Mammary epithelial cell (primary cell): ENCODE measurements at regions of chr22 and their contacts with region 1.

Region 1: DNA sequence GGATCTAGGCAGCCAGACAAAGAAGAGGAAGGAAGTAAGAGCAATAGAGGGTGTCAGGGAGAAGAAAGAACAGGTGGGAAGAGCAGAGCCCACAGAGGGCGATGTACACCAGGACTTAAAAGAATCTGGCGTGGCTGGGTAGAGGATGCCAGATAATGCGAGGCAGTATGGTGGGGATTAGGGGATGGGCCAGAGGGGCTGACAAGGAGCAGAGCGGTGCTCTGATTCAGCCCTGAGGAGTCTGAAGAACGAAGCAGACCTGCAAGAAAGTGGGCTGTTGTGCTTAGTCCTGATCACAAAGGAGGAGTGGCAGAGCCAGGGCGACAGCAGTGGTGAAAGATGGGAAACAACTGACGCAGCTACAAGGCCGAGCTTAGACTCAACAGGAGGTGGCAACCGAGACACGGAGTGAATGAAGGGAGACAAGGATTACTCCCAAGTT is 163.7 kb downstream of the LARGE1 start:
- DNase-seq: no peak
- H3K4me3 ChIP-seq: no peak overlapping the region
- H3K27ac ChIP-seq: no peak overlapping the region
- H3K4me1 ChIP-seq: no peaks in the 10 kb centered on the region
- H3K27me3 ChIP-seq: no peaks in the 10 kb centered on the region
- CTCF ChIP-seq: no peak

Region 2: GRCh38 chr22:33492210-33492651 is 264.3 kb before region 1 on chr22:
- CTCF ChIA-PET with region 1: no interaction called
- dilution Hi-C with region 1: no loop called
- in situ Hi-C with region 1: no loop called
- intact Hi-C with region 1: no loop called
- DNase-seq: no peak
- H3K4me3 ChIP-seq: no peak overlapping the region
- H3K27ac ChIP-seq: no peak overlapping the region
- H3K4me1 ChIP-seq: no peaks in the 10 kb centered on the region
- H3K27me3 ChIP-seq: no peaks in the 10 kb centered on the region
- CTCF ChIP-seq: no peak

Region 3: GRCh38 chr22:33737662-33738061 is 18.9 kb before region 1 on chr22:
- CTCF ChIA-PET with region 1: no interaction called
- dilution Hi-C with region 1: no loop called
- in situ Hi-C with region 1: no loop called
- intact Hi-C with region 1: no loop called
- DNase-seq: no peak
- H3K4me3 ChIP-seq: no peak overlapping the region
- H3K27ac ChIP-seq: no peak overlapping the region
- H3K4me1 ChIP-seq: no peaks in the 10 kb centered on the region
- H3K27me3 ChIP-seq: no peaks in the 10 kb centered on the region
- CTCF ChIP-seq: no peak

Region 4: DNA sequence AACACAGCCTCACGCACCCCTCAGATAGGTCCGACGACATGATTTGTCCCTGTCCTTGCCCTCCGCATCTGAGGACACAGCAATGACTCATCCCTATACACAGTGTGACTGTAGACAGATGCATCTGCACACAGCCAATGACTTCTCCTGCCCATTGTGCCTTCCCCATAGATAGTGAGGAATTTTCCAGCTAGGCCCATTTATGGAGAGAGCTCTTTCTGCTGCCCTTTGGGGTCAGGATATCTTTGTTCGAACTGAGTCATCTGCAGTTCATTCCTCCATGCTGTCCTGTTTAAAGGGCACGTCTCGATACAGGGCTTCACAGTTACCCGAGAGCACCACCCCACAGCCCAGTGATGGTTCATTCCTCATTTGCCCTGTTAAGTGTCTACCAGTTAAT is 67.0 kb after region 1 on chr22:
- CTCF ChIA-PET with region 1: no interaction called
- dilution Hi-C with region 1: loop called (anchors 5 kb)
- in situ Hi-C with region 1: no loop called
- intact Hi-C with region 1: no loop called
- DNase-seq: no peak
- H3K4me3 ChIP-seq: no peak overlapping the region
- H3K27ac ChIP-seq: no peak overlapping the region
- H3K4me1 ChIP-seq: no peaks in the 10 kb centered on the region
- H3K27me3 ChIP-seq: no peaks in the 10 kb centered on the region
- CTCF ChIP-seq: no peak